ENCODE measurements at regions of chr3 and their contacts with region 1.

Region 1: DNA sequence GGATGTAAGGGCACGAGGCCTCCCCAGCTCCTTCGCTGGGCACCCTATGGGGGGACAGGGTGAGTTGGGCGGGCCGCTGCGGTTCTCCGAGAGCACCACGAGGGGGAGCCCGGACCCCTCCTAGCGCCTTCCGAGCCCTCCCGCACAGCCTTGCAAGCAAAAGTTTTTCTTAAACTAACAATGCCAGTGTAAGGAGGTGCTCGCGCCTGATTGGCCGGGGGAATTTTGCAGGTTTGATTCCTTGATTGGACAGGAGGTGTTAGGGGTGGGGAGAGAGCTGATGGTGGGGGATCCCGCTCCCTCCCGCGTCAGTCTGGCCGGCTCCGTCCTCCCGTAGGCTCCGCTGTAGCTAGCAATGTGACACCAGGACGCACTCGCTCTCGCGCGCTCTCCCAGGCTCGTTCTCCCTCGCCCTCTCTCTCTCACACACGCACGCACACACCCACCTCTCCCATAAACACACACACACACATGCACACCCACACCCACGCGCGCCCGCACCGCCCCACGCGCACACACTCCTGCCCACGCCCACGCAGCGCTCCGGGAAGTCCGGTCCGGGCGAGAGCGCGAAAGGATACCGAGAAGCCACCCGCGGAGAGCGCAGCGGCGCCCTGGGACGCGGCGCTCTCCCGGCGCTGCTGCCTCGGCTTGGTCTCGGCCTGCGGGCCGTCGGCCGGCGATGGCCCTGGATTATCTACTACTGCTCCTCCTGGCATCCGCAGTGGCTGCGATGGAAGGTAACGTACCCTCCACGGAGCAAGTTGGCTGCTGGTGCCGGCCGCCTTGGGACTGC is at the start of gene EPHB1:
- DNase-seq: peak; percentile 80 to 86 (median 80)
- ATAC-seq: peak; percentile 92 to 96 (median 93)
- H3K4me3 ChIP-seq: peak within 1 kb of the TSS; percentile 43 to 50 (median 50)
- H3K27ac ChIP-seq: no peak within 1 kb of the TSS
- H3K4me1 ChIP-seq: peaks cover 0 to 13% (median 3%) of the 10 kb centered on the region in 4 donors
- H3K27me3 ChIP-seq: peaks cover 8 to 12% of the 10 kb centered on the region in 2 donors
- CTCF ChIP-seq: peak; percentile 85 to 92 (median 91)
- POLR2A ChIP-seq: no peak
- total RNA-seq, gene EPHB1: 0.63 to 10.9 (median 1.8) TPM

Region 2: GRCh38 chr3:134630506-134630905 is 164.6 kb before region 1 on chr3:
- intact Hi-C with region 1: no loop called
- DNase-seq: no peak
- ATAC-seq: no peak
- H3K4me3 ChIP-seq: no peak overlapping the region
- H3K27ac ChIP-seq: no peak overlapping the region
- H3K4me1 ChIP-seq: no peaks in the 10 kb centered on the region
- H3K27me3 ChIP-seq: no peaks in the 10 kb centered on the region
- CTCF ChIP-seq: peak in 1 of 4 donors; percentile 4
- POLR2A ChIP-seq: no peak

Region 3: GRCh38 chr3:135240426-135240825 is 445.3 kb after region 1 on chr3:
- intact Hi-C with region 1: loop called in 1 of 2 experiments (anchors 10 kb)
- DNase-seq: no peak
- ATAC-seq: peak; percentile 61 to 83 (median 74)
- H3K4me3 ChIP-seq: no peak overlapping the region
- H3K27ac ChIP-seq: no peak overlapping the region
- H3K4me1 ChIP-seq: peaks cover 0 to 5% (median 0%) of the 10 kb centered on the region in 4 donors
- H3K27me3 ChIP-seq: no peaks in the 10 kb centered on the region
- CTCF ChIP-seq: peak; percentile 11 to 42 (median 26)
- POLR2A ChIP-seq: no peak

Region 4: GRCh38 chr3:135503760-135504686 is 708.9 kb after region 1 on chr3:
- intact Hi-C with region 1: loop called (anchors 10 kb)
- DNase-seq: peak; percentile 63 to 75 (median 66)
- ATAC-seq: peak; percentile 88 to 90 (median 90)
- H3K4me3 ChIP-seq: no peak overlapping the region
- H3K27ac ChIP-seq: no peak overlapping the region
- H3K4me1 ChIP-seq: no peaks in the 10 kb centered on the region
- H3K27me3 ChIP-seq: no peaks in the 10 kb centered on the region
- CTCF ChIP-seq: peak; percentile 52 to 65 (median 62)
- POLR2A ChIP-seq: no peak

Region 5: GRCh38 chr3:135895106-135895733 is 1100.1 kb after region 1 on chr3:
- intact Hi-C with region 1: loop called (anchors 10 kb)
- DNase-seq: peak; percentile 70 to 73 (median 73)
- ATAC-seq: peak; percentile 88 to 93 (median 92)
- H3K4me3 ChIP-seq: no peak overlapping the region
- H3K27ac ChIP-seq: no peak overlapping the region
- H3K4me1 ChIP-seq: no peaks in the 10 kb centered on the region
- H3K27me3 ChIP-seq: no peaks in the 10 kb centered on the region
- CTCF ChIP-seq: peak; percentile 71 to 94 (median 90)
- POLR2A ChIP-seq: no peak

Measured in right lobe of liver (tissue), 6 donors.